PC-3 (cell line): ENCODE measurements at regions of chr1 and their contacts with region 1.

Region 1: DNA sequence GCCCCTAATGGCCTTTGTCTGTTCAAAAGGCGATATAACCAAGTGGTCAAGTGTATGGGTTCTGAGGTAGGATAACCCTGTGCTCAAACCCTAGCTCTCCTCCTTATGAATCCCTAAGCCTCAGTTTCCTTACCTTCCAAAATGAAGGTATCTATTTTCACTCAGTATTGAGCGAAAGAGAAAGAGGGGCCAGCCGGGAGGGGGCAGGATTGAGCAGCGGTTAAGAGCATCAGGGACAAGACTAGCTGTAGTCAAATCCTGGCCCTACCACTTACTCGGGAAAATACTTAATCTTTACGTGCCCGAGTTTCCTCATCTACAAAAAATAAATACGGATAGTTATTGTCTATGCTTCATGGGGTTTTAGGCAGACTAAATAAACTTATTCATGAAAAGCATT is 25.7 kb downstream of the LY9 start:
- DNase-seq: no peak
- ATAC-seq: no peak
- H3K4me3 ChIP-seq: no peak overlapping the region
- H3K27ac ChIP-seq: no peak overlapping the region
- H3K4me1 ChIP-seq: peaks cover 15% of the 10 kb centered on the region
- H3K27me3 ChIP-seq: no peaks in the 10 kb centered on the region
- CTCF ChIP-seq: peak; percentile 46; the same call in 1 of the 2 replicates

Region 2: DNA sequence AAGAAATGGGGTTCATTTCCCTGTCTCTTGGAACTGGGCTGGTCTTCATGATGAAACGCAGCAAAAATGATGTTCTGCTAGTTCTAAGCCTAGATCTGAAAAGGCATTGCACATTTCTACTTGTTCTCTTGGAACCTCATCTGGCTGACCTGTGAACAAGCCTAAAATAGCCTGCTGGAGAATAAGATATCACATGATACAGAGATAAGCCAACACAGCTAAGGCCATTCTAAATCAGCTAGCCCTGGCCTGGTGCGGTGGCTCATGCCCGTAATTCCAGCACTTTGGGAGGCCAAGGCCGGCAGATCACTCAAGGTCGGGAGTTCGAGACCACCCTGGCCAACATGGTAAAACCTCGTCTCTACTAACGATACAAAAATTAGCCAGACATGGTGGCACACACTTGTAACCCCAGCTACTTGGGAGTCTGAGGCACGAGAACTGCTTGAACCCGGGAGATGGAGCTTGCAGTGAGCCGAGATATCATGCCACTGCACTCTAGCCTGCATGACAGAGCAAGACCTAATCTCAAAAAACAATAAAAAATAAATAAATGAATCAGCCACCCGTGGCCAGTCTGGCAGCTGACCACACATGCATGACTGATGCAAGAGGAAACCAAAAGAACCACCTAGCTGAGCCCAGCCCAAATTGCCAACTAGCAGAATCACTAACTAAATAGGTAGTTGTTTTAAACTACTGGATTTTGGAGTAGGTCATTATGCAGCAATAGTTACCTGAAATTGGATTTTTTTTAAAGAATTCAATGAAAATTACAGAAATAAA is 23.0 kb after region 1 on chr1:
- CTCF ChIA-PET with region 1: no interaction called
- POLR2A ChIA-PET with region 1: no interaction called
- intact Hi-C with region 1: no loop called
- DNase-seq: no peak
- ATAC-seq: no peak
- H3K4me3 ChIP-seq: no peak overlapping the region
- H3K27ac ChIP-seq: no peak overlapping the region
- H3K4me1 ChIP-seq: no peaks in the 10 kb centered on the region
- H3K27me3 ChIP-seq: peaks cover 5% of the 10 kb centered on the region; the same call in 1 of the 2 replicates
- CTCF ChIP-seq: no peak

Region 3: GRCh38 chr1:160891474-160891873 is 69.8 kb after region 1 on chr1:
- CTCF ChIA-PET with region 1: interaction called, 10 read pairs
- POLR2A ChIA-PET with region 1: no interaction called
- intact Hi-C with region 1: no loop called
- DNase-seq: no peak
- ATAC-seq: no peak
- H3K4me3 ChIP-seq: no peak overlapping the region
- H3K27ac ChIP-seq: no peak overlapping the region
- H3K4me1 ChIP-seq: no peaks in the 10 kb centered on the region
- H3K27me3 ChIP-seq: peaks cover 5% of the 10 kb centered on the region; the same call in 1 of the 2 replicates
- CTCF ChIP-seq: no peak